ENCODE measurements at regions of chr20 and their contacts with region 1.

Region 1: GRCh38 chr20:833450-834150 is at the start of gene FAM110A:
- DNase-seq: peak; percentile 96
- H3K27ac ChIP-seq: peak within 1 kb of the TSS; percentile 85
- CTCF ChIP-seq: no peak

Region 2: GRCh38 chr20:844473-845225 is 11.0 kb after region 1 on chr20:
- CTCF ChIA-PET with region 1: no interaction called
- POLR2A ChIA-PET with region 1: interaction called, 10 read pairs
- DNase-seq: peak; percentile 98
- H3K27ac ChIP-seq: peak overlapping the region; percentile 97
- CTCF ChIP-seq: no peak